Activated CD4-positive, alpha-beta T cell treated with anti-CD3 and anti-CD28 coated beads, Interleukin-2, amount 10 ng/mL, durations not matched to agents 7 days and 5 days (primary cell): ENCODE measurements at regions of chr2 and their contacts with region 1.

Region 1: DNA sequence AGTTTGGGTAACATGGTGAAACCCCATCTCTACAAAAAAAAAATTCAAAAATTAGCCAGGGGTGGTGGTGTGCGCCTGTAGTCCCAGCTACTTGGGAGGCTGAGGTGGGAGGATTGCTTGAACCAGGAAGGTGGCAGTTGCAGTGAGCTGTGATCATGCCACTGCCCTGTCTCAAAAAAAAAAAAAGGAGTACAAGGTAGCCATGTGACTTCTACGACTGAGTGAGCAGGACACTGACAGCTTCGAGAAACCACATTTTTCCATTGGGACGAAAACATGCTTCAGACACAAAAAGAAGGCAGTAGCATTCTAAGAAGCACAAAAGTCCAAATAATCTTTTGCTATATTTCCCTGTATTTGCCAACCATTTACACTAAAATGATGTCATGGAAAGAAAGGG is 19.7 kb upstream of the IKZF2 start:
- DNase-seq: no peak
- H3K4me3 Mint-ChIP-seq: no peak overlapping the region
- H3K27ac Mint-ChIP-seq: no peak overlapping the region
- H3K4me1 Mint-ChIP-seq: no peaks in the 10 kb centered on the region
- H3K27me3 Mint-ChIP-seq: peaks cover 2% of the 10 kb centered on the region

Region 2: DNA sequence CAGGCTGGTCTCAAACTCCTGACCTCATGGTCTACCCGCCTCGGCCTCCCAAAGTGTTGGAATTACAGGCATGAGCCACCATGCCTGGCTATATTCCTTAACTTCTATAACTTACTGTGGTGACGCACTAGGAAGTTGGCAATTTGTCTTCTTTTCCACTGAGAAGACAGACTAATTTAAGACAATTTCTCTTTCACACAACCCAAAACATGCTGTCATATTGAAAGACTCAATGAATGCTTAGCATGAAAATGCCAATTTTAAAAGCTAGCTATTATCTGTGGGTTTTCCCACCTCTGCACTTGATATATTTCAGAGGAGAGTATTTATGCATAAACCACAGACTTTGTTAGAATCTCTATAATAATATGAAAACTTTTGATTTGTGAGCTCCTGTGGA is 717.0 kb before region 1 on chr2:
- CTCF ChIA-PET with region 1: no interaction called
- POLR2A ChIA-PET with region 1: interaction called, 11 read pairs
- DNase-seq: no peak
- H3K4me3 Mint-ChIP-seq: no peak overlapping the region
- H3K27ac Mint-ChIP-seq: no peak overlapping the region
- H3K4me1 Mint-ChIP-seq: no peaks in the 10 kb centered on the region
- H3K27me3 Mint-ChIP-seq: no peaks in the 10 kb centered on the region

Region 3: DNA sequence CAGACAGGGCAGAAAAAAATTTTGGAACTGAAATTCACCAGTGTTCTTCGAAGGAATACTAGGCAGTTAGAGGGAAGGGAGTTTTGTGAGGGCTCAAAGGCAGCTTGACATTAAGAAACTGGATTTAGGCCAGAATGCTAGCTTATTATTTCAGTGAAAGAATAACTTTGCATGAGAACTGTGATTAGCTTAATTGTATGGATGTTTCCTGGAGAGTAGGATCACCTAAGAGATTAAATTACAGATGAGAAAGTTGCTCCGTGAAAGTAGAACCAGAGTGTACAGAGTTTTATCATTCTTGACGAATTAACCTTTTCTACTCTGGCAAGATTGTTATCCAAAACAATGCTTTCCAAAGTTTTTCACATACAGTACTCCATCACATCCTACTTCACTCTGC is 119.4 kb after region 1 on chr2:
- CTCF ChIA-PET with region 1: no interaction called
- POLR2A ChIA-PET with region 1: no interaction called
- DNase-seq: no peak
- H3K4me3 Mint-ChIP-seq: no peak overlapping the region
- H3K27ac Mint-ChIP-seq: no peak overlapping the region
- H3K4me1 Mint-ChIP-seq: peaks cover 6% of the 10 kb centered on the region
- H3K27me3 Mint-ChIP-seq: no peaks in the 10 kb centered on the region